Right lobe of liver (tissue), 6 donors: ENCODE measurements at regions of chr10 and their contacts with region 1.

Region 1: GRCh38 chr10:119416855-119417254 is 125.7 kb downstream of the RGS10 start:
- DNase-seq: peak; percentile 70 to 74 (median 71)
- ATAC-seq: peak; percentile 70 to 83 (median 82)
- H3K4me3 ChIP-seq: no peak overlapping the region
- H3K27ac ChIP-seq: no peak overlapping the region
- H3K4me1 ChIP-seq: peaks cover 0 to 10% (median 0%) of the 10 kb centered on the region in 4 donors
- H3K27me3 ChIP-seq: no peaks in the 10 kb centered on the region
- CTCF ChIP-seq: peak; percentile 77 to 87 (median 82)
- POLR2A ChIP-seq: no peak

Region 2: GRCh38 chr10:119120413-119120867 is 296.4 kb before region 1 on chr10:
- intact Hi-C with region 1: no loop called
- DNase-seq: no peak
- ATAC-seq: peak; percentile 85 to 95 (median 89)
- H3K4me3 ChIP-seq: no peak overlapping the region
- H3K27ac ChIP-seq: peak overlapping the region; percentile 66 to 90 (median 84)
- H3K4me1 ChIP-seq: peaks cover 0 to 39% (median 15%) of the 10 kb centered on the region in 4 donors
- H3K27me3 ChIP-seq: no peaks in the 10 kb centered on the region
- CTCF ChIP-seq: no peak
- POLR2A ChIP-seq: no peak

Region 3: DNA sequence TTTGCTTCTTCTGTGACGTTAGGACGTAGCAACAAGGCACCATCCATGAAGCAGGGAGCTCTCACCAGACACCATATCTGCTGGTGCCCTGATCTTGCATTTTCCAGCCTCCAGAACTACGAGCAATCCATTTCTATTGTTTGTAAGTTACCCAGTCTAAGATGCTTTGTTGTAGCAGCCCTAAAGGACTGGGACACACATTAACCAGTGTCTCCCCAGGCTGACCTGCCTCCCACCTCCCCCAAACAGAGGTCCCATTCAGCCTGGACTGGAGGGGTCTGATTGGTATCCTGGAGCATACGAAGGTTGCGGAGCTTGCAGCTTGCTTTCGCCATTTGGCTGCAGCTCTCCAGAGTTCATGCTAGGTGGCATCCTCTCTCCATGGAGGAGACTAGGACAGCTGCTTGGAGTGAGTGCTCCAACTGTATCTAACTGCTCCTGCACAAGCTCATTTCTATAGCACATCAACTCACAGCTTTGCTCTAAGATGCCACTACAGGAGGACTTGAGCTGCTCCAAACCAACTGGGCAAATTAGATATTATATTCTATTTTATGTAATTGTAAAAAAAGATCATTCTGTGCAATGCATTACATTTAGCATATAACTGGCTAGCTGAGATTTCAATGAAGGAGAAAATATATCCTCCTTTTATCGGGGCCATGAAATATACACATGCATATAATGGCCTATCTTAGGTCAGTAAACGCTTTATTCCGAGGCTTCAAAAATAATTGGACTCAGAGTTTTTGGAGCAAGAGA is 217.4 kb before region 1 on chr10:
- intact Hi-C with region 1: loop called (anchors 5 to 10 kb)
- DNase-seq: peak in 2 of 3 donors; percentile 49 to 69
- ATAC-seq: peak; percentile 96 to 97 (median 96)
- H3K4me3 ChIP-seq: no peak overlapping the region
- H3K27ac ChIP-seq: no peak overlapping the region
- H3K4me1 ChIP-seq: no peaks in the 10 kb centered on the region
- H3K27me3 ChIP-seq: no peaks in the 10 kb centered on the region
- CTCF ChIP-seq: peak; percentile 74 to 86 (median 80)
- POLR2A ChIP-seq: no peak

Region 4: GRCh38 chr10:119207367-119207668 is 209.5 kb before region 1 on chr10 and contains the start of gene GRK5:
- intact Hi-C with region 1: loop called (anchors 5 to 10 kb)
- DNase-seq: peak; percentile 95 to 97 (median 96)
- ATAC-seq: peak; percentile 85 to 93 (median 90)
- H3K4me3 ChIP-seq: peak within 1 kb of the TSS; percentile 61 to 88 (median 84)
- H3K27ac ChIP-seq: peak within 1 kb of the TSS; percentile 97 to 99 (median 97)
- H3K4me1 ChIP-seq: peaks cover 0 to 9% (median 3%) of the 10 kb centered on the region in 4 donors
- H3K27me3 ChIP-seq: no peaks in the 10 kb centered on the region
- CTCF ChIP-seq: no peak
- POLR2A ChIP-seq: peak; percentile 79
- total RNA-seq, gene GRK5: 5.9 to 11.5 (median 7.9) TPM

Region 5: GRCh38 chr10:119281581-119282071 is 135.2 kb before region 1 on chr10:
- intact Hi-C with region 1: loop called in 1 of 2 experiments (anchors 10 kb)
- DNase-seq: peak; percentile 77 to 90 (median 87)
- ATAC-seq: peak; percentile 36 to 53 (median 37)
- H3K4me3 ChIP-seq: no peak overlapping the region
- H3K27ac ChIP-seq: no peak overlapping the region
- H3K4me1 ChIP-seq: peaks cover 0 to 51% (median 16%) of the 10 kb centered on the region in 4 donors
- H3K27me3 ChIP-seq: no peaks in the 10 kb centered on the region
- CTCF ChIP-seq: no peak
- POLR2A ChIP-seq: no peak